Caco-2 (cell line): ENCODE measurements at regions of chr11 and their contacts with region 1.

Region 1: DNA sequence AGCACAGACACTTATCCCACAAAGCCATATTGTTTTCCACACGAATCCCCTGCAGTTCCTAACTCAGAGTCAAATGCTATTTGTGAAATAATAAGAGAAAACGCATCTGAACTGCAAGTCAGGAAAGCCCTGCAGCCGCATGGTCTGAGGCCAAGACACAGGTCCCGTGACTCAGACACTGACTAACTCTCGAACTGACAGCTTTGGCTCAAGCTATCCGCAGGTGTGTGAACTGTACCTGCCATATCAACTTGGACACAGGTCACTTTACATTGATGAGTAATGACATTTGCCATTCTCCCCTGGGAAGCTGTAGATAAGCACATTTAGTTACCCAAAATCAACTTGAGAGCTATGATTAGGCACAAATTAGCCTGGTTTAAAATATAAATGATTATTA is 34.9 kb upstream of the NFRKB start:
- DNase-seq: no peak
- H3K4me3 ChIP-seq: no peak overlapping the region
- H3K4me3 Mint-ChIP-seq: no peak overlapping the region
- H3K27ac Mint-ChIP-seq: no peak overlapping the region
- H3K4me1 ChIP-seq: no peaks in the 10 kb centered on the region
- H3K4me1 Mint-ChIP-seq: no peaks in the 10 kb centered on the region
- H3K27me3 ChIP-seq: no peaks in the 10 kb centered on the region
- H3K27me3 Mint-ChIP-seq: no peaks in the 10 kb centered on the region
- CTCF ChIP-seq: no peak

Region 2: DNA sequence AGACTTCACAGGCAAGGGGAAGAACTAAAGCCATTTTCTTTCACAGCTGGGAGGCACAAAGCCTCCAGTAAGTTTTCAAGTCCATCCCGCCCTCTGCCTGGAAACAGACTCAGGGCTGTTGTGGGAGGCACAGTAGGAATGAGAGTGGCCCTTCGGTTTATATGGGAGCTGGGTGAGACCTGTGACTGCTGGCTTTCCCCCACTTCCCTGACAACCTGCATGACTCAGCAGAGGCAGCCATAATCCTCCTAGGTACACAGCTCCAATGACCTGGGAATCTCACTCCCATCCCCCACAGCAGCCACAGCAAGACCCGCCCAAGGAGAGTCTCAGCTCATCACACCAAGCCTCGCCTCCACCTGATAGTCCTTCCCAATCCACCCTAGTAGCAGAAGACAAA is 126.8 kb before region 1 on chr11:
- CTCF ChIA-PET with region 1: no interaction called
- POLR2A ChIA-PET with region 1: no interaction called
- intact Hi-C with region 1: no loop called
- DNase-seq: peak; percentile 69 to 92
- H3K4me3 ChIP-seq: no peak overlapping the region
- H3K4me3 Mint-ChIP-seq: peak overlapping the region; percentile 11
- H3K27ac Mint-ChIP-seq: peak overlapping the region; percentile 81
- H3K4me1 ChIP-seq: peaks cover 41% of the 10 kb centered on the region
- H3K4me1 Mint-ChIP-seq: peaks cover 37% of the 10 kb centered on the region
- H3K27me3 ChIP-seq: no peaks in the 10 kb centered on the region
- H3K27me3 Mint-ChIP-seq: no peaks in the 10 kb centered on the region
- CTCF ChIP-seq: no peak

Region 3: GRCh38 chr11:129960216-129961214 is 30.2 kb after region 1 on chr11:
- CTCF ChIA-PET with region 1: no interaction called
- POLR2A ChIA-PET with region 1: no interaction called
- intact Hi-C with region 1: loop called (anchors 5 kb)
- DNase-seq: peak in 1 of 2 experiments; percentile 39
- H3K4me3 ChIP-seq: no peak overlapping the region
- H3K4me3 Mint-ChIP-seq: no peak overlapping the region
- H3K27ac Mint-ChIP-seq: peak overlapping the region; percentile 20
- H3K4me1 ChIP-seq: peaks cover 10% of the 10 kb centered on the region
- H3K4me1 Mint-ChIP-seq: peaks cover 9% of the 10 kb centered on the region
- H3K27me3 ChIP-seq: no peaks in the 10 kb centered on the region
- H3K27me3 Mint-ChIP-seq: no peaks in the 10 kb centered on the region
- CTCF ChIP-seq: no peak

Region 4: DNA sequence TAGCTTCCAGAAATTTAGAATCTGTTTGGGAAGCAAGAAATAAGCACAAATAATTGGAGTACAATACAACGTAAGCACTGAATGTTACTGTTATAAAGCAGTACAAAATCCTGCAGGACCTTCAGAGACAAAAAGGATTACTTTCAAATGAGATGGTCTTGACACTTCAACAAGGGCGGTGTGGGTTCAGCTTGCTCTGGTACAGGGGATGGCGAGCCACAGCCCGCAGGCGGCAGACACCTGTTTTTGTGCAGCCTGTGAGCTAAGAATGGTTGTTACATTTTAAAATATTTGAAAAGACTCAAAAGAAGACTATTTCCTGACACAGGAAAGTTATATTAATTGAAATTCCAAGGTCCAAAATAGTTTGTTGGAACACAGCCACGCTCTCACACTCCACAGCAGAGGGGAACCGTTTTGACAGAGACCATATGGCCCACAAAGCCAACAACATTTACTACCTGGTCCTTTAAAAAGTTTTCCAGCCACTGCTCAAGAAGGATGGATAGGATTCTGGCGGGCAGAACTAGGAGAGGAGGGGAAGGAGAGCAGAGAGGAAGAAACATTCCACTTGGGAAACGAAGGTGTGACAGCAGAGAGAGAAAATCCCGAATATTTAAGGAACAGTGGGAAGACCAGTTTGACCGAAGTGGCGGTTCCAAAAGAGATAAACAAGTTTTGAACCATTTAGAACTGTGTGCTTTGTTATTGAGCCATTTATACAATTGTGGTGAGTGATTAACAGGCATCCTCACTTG is 66.0 kb after region 1 on chr11:
- CTCF ChIA-PET with region 1: no interaction called
- POLR2A ChIA-PET with region 1: no interaction called
- intact Hi-C with region 1: no loop called
- DNase-seq: no peak
- H3K4me3 ChIP-seq: no peak overlapping the region
- H3K4me3 Mint-ChIP-seq: peak overlapping the region; percentile 15
- H3K27ac Mint-ChIP-seq: peak overlapping the region; percentile 39
- H3K4me1 ChIP-seq: peaks cover 40% of the 10 kb centered on the region
- H3K4me1 Mint-ChIP-seq: peaks cover 62% of the 10 kb centered on the region
- H3K27me3 ChIP-seq: no peaks in the 10 kb centered on the region
- H3K27me3 Mint-ChIP-seq: no peaks in the 10 kb centered on the region
- CTCF ChIP-seq: no peak